HEK293 (cell line): ENCODE measurements at regions of chr1 and their contacts with region 1.

Region 1: GRCh38 chr1:101520302-101520701 is 283.5 kb downstream of the S1PR1 start:
- H3K4me3 ChIP-seq: no peak overlapping the region
- H3K27ac ChIP-seq: no peak overlapping the region
- H3K4me1 ChIP-seq: no peaks in the 10 kb centered on the region
- CTCF ChIP-seq: 0 out of 2 replicates have a peak, but pooled peaks have one; percentile 36

Region 2: DNA sequence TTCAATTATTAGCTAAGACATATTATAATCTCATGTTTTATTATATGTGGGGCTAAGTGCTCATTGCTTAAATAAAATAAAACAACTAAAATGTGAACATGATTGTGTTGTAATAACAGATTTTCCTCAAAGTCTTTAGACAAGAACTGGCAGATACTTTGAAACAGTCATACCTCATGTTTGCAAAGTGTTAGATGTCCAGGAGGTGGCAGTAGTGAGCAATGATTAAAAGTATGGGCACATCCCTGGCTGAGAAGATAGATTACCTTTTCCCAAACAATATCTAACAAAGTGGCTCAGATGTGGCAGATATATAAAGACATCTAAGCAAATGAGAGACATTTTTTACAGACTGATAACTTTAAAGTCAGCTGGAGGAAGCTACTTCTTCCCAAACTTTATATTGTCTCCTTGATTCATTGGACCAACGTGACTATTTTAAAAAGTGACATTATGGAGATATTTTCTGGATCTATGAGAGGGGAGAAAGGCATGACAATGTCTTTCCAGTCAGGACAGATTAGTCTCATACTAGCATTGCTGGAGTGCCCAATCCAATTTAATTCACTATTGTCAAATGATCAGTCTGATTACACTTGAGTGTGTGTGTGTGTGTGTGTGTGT is 13.6 kb before region 1 on chr1:
- CTCF ChIA-PET with region 1: interaction called, 21 read pairs
- POLR2A ChIA-PET with region 1: no interaction called
- H3K4me3 ChIP-seq: no peak overlapping the region
- H3K27ac ChIP-seq: no peak overlapping the region
- H3K4me1 ChIP-seq: no peaks in the 10 kb centered on the region
- CTCF ChIP-seq: no peak